Activated T-helper 2 cell treated with anti-CD3 and anti-CD28 coated beads, Interferon-gamma antibody, Interleukin-2, Interleukin-4, amounts not matched to agents 10 μg/mL and 5 μg/mL and 100 μg/mL, durations not matched to agents 14 hours and 24 hours and 36 hours (primary cell): ENCODE measurements at regions of chr15 and their contacts with region 1.

Region 1: DNA sequence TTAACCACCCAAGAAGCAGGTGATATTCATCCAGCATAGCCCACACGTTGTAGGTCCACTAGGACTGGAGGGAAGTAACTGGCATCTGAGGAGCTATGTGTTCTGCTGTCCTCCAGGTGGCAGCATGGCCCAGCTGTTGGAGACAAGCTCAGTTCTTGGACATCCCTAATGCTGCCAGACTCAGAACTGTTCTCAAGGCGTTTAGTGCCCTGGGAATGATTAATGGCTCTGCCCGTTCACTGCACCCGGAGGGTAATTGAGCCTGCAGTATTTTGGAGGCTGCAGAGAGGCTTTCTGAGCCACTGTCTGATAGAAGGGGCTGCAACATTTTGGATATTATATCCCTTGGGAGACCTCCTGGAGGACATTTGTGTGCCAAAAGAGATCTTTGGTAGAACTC is 521.2 kb upstream of the SEMA6D start:
- DNase-seq: peak; percentile 17
- H3K4me3 Mint-ChIP-seq: no peak overlapping the region
- H3K27ac Mint-ChIP-seq: no peak overlapping the region
- H3K4me1 Mint-ChIP-seq: no peaks in the 10 kb centered on the region
- H3K27me3 Mint-ChIP-seq: no peaks in the 10 kb centered on the region

Region 2: GRCh38 chr15:47717036-47717611 is 521.1 kb after region 1 on chr15 and contains the start of gene SEMA6D:
- intact Hi-C with region 1: loop called (anchors 10 kb)
- DNase-seq: no peak
- H3K4me3 Mint-ChIP-seq: no peak within 1 kb of the TSS
- H3K27ac Mint-ChIP-seq: no peak within 1 kb of the TSS
- H3K4me1 Mint-ChIP-seq: no peaks in the 10 kb centered on the region
- H3K27me3 Mint-ChIP-seq: peaks cover 57% of the 10 kb centered on the region
- total RNA-seq, gene SEMA6D: not detected in 2 replicates

Region 3: DNA sequence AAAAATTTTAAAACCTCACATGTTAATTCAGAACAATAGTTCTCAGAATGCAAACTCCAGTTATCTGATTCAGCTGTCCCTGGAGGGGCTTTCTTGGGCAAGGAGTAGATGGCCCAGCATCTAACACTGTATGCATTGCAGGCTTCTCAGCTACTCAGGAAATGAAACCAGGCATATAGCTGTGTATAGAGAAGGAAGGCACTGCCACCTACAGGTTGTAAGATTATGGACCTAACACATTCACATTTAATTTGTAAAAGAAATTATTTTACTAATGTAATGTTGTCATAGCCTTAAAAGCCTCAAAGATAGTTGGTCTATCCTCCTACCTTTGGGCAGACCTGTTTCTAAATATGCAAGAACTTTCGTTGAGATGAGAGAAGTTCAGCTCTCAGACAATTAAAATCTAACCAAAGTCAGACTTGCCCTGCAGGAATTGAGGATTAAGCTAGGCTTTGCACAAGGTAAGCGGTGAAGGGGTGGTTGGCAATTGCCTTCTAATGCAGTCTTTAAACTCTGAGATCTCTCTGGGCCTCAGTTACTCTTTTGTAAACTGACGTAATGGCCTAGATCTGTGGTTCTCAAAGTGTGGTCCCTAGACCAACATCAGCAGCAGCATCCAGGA is 792.0 kb after region 1 on chr15:
- intact Hi-C with region 1: loop called (anchors 5 kb)
- DNase-seq: no peak
- H3K4me3 Mint-ChIP-seq: no peak overlapping the region
- H3K27ac Mint-ChIP-seq: no peak overlapping the region
- H3K4me1 Mint-ChIP-seq: peaks cover 6% of the 10 kb centered on the region
- H3K27me3 Mint-ChIP-seq: peaks cover 6% of the 10 kb centered on the region

Region 4: GRCh38 chr15:48285329-48286214 is 1089.5 kb after region 1 on chr15:
- intact Hi-C with region 1: loop called (anchors 10 kb)
- DNase-seq: peak; percentile 18
- H3K4me3 Mint-ChIP-seq: no peak overlapping the region
- H3K27ac Mint-ChIP-seq: no peak overlapping the region
- H3K4me1 Mint-ChIP-seq: peaks cover 4% of the 10 kb centered on the region
- H3K27me3 Mint-ChIP-seq: peaks cover 8% of the 10 kb centered on the region

Region 5: GRCh38 chr15:48352474-48353072 is 1156.5 kb after region 1 on chr15:
- intact Hi-C with region 1: loop called (anchors 5 kb)
- DNase-seq: peak; percentile 35
- H3K4me3 Mint-ChIP-seq: no peak overlapping the region
- H3K27ac Mint-ChIP-seq: no peak overlapping the region
- H3K4me1 Mint-ChIP-seq: no peaks in the 10 kb centered on the region
- H3K27me3 Mint-ChIP-seq: peaks cover 2% of the 10 kb centered on the region